ENCODE measurements at regions of chr20 and their contacts with region 1.

Region 1: DNA sequence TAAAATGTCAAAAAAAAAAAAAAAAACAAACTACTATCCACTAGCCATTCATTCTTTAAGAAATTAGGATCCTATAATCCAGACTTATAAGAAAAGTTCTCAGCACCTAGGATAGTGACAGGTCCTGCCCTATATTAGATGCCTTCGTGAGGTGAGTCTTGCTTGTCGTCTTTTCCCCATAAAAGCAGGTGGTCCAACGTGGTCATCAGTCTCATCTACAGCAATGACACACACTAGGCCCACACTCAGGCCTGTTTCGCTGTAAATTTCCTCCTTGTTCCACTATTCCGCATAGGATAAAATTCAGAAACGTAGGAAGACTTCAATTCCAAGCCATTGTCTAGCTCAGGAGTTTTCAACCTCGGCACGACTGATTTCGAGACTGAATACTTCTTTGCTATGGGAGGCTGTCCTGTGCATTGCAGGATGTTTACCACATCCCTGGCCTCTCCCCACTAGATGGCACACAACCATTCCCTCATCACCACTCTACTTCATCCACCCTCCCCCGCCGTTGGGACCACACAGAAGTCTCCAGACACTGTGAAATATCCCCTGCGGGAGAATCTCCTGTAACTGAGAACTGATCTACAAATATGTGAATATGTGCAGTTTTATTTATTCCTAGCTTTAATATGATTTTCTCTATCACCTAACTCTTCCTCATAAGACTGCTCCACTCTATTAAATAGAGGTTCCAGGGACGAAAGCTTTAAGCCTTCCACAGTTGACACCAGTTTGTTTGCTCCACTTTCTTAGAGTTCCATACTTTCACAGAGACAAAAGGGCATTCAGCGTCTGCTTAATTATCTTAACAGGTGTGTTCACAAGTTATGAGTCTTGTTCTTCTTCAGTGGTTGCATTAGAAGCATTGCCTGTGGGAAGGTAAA is 346.3 kb downstream of the BMP2 start:
- DNase-seq: peak; percentile 17 to 50
- ATAC-seq: peak; percentile 79 to 96 (median 93)
- H3K4me3 ChIP-seq: no peak overlapping the region
- H3K27ac ChIP-seq: no peak overlapping the region
- H3K4me1 ChIP-seq: no peaks in the 10 kb centered on the region
- H3K27me3 ChIP-seq: no peaks in the 10 kb centered on the region
- CTCF ChIP-seq: peak; percentile 33 to 70 (median 54)

Region 2: DNA sequence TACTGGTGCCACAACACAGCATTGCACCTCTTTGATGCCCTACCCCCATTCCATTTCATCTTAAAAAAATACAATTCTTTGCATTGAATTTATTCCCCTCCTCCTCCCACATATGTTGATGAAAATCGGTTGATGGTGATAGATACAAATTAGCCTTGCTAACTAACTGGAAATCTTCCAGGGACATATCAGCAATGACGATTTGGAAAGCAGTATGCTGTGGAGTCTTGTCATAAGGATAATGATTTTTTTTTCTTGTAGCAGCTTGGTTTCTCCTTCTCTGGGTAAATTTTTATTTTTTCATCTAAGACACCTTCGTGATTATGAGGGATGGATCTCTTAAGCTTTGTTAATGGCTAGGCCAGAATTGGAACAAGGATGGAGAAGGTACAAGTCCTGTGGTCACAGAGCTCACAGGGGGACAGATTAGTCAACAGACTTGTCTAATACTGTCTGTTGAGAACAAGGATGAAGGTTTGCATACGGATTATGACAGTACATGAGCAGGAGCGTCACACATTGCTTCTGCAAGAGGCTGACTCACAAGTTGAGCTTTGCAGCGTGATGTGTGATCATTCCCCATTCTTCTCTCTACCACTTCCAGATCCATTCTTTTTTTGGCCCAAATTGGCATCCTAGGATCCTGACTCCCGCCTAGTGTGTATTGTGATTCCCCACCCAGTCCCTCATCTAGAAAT is 757.9 kb before region 1 on chr20:
- intact Hi-C with region 1: no loop called
- DNase-seq: no peak
- ATAC-seq: no peak
- H3K4me3 ChIP-seq: no peak overlapping the region
- H3K27ac ChIP-seq: no peak overlapping the region
- H3K4me1 ChIP-seq: no peaks in the 10 kb centered on the region
- H3K27me3 ChIP-seq: no peaks in the 10 kb centered on the region
- CTCF ChIP-seq: no peak

Region 3: DNA sequence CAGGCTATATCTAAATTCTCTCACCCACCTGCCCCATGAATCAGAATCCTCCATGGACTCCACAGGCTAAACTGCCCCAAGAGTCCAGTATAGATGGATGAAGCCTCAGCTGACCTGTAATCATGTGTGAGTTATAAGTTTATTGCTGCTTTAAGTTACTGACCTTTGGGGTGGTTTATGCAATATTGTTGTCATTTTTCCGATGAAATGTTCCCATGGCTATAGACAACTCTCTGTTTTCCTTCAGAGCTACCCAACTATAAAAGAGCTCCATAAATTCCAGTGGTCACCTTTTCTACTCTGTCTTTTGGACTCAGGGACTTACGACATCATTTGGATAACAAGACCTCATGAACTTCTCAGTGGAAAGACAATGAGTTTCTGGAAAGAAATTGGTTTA is 134.2 kb before region 1 on chr20:
- intact Hi-C with region 1: no loop called
- DNase-seq: no peak
- ATAC-seq: no peak
- H3K4me3 ChIP-seq: no peak overlapping the region
- H3K27ac ChIP-seq: no peak overlapping the region
- H3K4me1 ChIP-seq: no peaks in the 10 kb centered on the region
- H3K27me3 ChIP-seq: no peaks in the 10 kb centered on the region
- CTCF ChIP-seq: no peak

Region 4: GRCh38 chr20:7161690-7162089 is 47.9 kb after region 1 on chr20:
- intact Hi-C with region 1: loop called in 4 of 10 experiments (anchors 2 to 10 kb)
- DNase-seq: peak in 1 of 2 donors; percentile 13
- ATAC-seq: no peak
- H3K4me3 ChIP-seq: no peak overlapping the region
- H3K27ac ChIP-seq: no peak overlapping the region
- H3K4me1 ChIP-seq: no peaks in the 10 kb centered on the region
- H3K27me3 ChIP-seq: no peaks in the 10 kb centered on the region
- CTCF ChIP-seq: peak in 6 of 9 donors; percentile 27 to 54 (median 50)

Region 5: GRCh38 chr20:7207186-7207798 is 93.5 kb after region 1 on chr20:
- intact Hi-C with region 1: no loop called
- DNase-seq: no peak
- ATAC-seq: no peak
- H3K4me3 ChIP-seq: no peak overlapping the region
- H3K27ac ChIP-seq: no peak overlapping the region
- H3K4me1 ChIP-seq: peaks cover 0 to 20% (median 0%) of the 10 kb centered on the region in 9 donors
- H3K27me3 ChIP-seq: no peaks in the 10 kb centered on the region
- CTCF ChIP-seq: no peak

Region 6: GRCh38 chr20:7272512-7272911 is 158.7 kb after region 1 on chr20:
- intact Hi-C with region 1: loop called in 2 of 10 experiments (anchors 5 kb)
- DNase-seq: no peak
- ATAC-seq: no peak
- H3K4me3 ChIP-seq: no peak overlapping the region
- H3K27ac ChIP-seq: no peak overlapping the region
- H3K4me1 ChIP-seq: no peaks in the 10 kb centered on the region
- H3K27me3 ChIP-seq: peaks cover 0 to 4% (median 0%) of the 10 kb centered on the region in 7 donors
- CTCF ChIP-seq: peak in 7 of 9 donors; percentile 19 to 46 (median 30)

Region 7: GRCh38 chr20:7375905-7376304 is 262.1 kb after region 1 on chr20:
- intact Hi-C with region 1: no loop called
- DNase-seq: no peak
- ATAC-seq: no peak
- H3K4me3 ChIP-seq: no peak overlapping the region
- H3K27ac ChIP-seq: no peak overlapping the region
- H3K4me1 ChIP-seq: no peaks in the 10 kb centered on the region
- H3K27me3 ChIP-seq: no peaks in the 10 kb centered on the region
- CTCF ChIP-seq: peak in 8 of 9 donors; percentile 19 to 53 (median 43)

Region 8: GRCh38 chr20:7866285-7866684 is 752.5 kb after region 1 on chr20:
- intact Hi-C with region 1: loop called in 1 of 10 experiments (anchors 10 kb)
- DNase-seq: no peak
- ATAC-seq: peak in 1 of 8 donors; percentile 61
- H3K4me3 ChIP-seq: peak overlapping the region in 1 of 10 donors; percentile 18
- H3K27ac ChIP-seq: peak overlapping the region in 1 of 10 donors; percentile 38
- H3K4me1 ChIP-seq: no peaks in the 10 kb centered on the region
- H3K27me3 ChIP-seq: no peaks in the 10 kb centered on the region
- CTCF ChIP-seq: no peak